ENCODE measurements at regions of chr12 and their contacts with region 1.

Region 1: GRCh38 chr12:3243376-3244084 is 166.4 kb downstream of the TSPAN9 start:
- DNase-seq: no peak
- H3K27ac ChIP-seq: no peak overlapping the region
- CTCF ChIP-seq: no peak

Region 2: DNA sequence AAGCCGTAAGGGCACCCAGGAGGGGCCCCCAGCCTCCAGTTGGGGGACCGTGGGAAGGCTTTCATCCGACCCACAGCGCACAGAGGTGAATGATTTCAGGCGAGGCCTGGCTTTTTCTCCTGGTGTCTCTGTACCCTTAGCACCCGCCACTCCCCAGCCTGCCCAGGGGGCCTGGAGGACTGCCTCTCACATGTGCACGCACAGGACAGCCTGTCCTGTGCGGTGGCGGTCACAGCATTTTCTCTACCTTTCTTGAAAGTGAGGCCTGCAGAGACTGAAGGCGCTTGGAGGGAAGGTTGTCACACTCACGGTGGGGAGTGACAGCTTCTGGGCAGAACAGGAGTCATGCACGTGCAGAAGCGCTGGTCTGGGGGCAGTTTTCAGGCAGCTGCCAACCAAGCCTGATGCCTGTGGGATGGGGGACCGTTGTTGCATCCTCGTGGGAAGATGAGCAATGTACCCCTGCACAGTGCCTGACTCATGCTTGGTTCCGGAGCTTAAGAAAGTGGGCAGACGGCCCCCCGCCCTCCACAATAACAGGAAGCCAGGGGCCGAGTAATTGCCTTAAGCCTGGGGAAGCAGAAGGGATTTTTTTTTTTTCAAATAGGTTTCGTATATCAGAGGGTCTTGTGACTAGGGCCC is 18.3 kb before region 1 on chr12:
- CTCF ChIA-PET with region 1: interaction called, 10 read pairs
- POLR2A ChIA-PET with region 1: no interaction called
- DNase-seq: no peak
- H3K27ac ChIP-seq: no peak overlapping the region
- CTCF ChIP-seq: no peak